ENCODE measurements at regions of chr1 and their contacts with region 1.

Region 1: DNA sequence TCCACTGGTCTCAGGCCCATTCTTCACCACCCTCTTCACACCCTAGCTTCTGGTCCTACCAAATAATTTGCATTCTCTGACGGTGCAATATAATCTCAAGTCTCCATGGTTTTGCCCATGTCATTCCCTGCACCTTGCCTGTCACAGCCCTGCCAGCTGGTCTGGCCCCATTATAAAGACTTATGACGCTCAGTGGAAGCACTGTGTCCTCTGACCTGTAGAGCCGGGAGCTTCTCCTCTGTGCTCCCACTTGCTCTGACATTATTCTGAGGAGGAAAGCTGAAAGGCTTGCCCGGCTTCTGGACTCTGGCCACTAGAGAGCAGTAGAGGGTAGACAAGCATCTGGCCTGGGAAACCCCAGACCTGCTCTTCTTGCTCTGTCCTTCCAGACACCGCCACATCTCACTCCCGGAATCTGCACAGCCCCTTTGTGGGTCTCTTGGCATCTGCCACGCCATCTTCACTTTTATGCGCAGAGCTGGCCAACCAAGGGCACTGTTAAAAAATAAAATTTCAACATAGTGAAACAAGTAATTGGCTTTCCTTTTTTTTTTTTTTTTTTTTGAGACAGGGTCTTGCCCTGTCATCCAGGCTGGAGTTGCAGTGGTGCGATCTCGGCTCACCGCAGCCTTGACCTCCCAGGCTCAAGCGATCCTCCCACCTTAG is 44.4 kb downstream of the NENF start:
- DNase-seq: peak; percentile 83
- ATAC-seq: peak; percentile 91
- H3K4me3 Mint-ChIP-seq: no peak overlapping the region
- H3K27ac Mint-ChIP-seq: no peak overlapping the region
- H3K4me1 Mint-ChIP-seq: peaks cover 25% of the 10 kb centered on the region
- H3K27me3 Mint-ChIP-seq: peaks cover 19% of the 10 kb centered on the region

Region 2: DNA sequence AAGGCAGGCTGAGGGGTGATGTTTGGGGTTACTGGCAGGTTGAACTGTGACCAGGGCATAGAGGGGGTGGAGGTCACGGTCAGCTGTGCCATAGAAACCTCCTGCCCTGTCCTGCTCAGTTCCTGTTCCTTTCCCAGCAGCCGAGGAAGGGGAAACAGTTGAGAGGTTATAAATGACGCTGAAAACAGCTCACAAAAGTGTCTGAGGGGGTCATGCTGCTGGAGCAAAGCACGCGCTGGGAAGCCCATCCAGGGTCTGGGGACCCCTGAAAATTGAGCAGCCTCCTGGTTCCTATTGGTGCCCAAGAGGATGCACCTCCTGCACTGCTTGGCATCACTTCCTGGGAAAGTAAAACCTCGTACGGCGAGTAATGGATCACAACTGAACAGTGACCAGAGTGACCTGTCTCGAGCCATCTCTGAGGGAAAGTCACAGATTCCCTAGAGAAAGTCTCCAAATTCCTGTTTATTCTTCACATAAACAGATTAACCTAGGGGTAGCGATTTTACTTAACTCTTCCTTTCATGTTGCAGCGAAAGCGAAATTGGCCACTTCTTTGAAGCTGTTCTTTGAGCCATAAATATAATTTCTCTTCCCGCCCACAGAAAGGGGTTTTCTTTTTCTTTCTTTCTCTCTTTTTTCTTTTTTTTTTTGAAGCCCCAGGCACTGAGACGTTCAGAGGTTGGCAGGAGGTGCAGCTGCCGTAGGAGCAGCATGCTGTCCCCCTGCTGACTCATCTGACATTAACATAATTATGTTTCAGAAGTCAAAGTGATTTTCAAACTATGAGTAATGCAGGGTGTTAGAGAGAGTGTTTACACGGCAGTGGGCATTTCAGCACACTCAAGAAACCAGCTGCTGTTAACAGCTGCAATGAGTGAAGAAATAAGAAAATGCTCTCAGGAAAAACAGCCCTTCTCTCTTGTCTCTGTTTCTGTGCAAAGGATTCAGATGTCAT is 89.7 kb after region 1 on chr1:
- CTCF ChIA-PET with region 1: interaction called, 17 read pairs
- POLR2A ChIA-PET with region 1: no interaction called
- DNase-seq: peak; percentile 64
- ATAC-seq: peak; percentile 99
- H3K4me3 Mint-ChIP-seq: peak overlapping the region; percentile 85
- H3K27ac Mint-ChIP-seq: peak overlapping the region; percentile 92
- H3K4me1 Mint-ChIP-seq: peaks cover 22% of the 10 kb centered on the region
- H3K27me3 Mint-ChIP-seq: peaks cover 15% of the 10 kb centered on the region

Region 3: DNA sequence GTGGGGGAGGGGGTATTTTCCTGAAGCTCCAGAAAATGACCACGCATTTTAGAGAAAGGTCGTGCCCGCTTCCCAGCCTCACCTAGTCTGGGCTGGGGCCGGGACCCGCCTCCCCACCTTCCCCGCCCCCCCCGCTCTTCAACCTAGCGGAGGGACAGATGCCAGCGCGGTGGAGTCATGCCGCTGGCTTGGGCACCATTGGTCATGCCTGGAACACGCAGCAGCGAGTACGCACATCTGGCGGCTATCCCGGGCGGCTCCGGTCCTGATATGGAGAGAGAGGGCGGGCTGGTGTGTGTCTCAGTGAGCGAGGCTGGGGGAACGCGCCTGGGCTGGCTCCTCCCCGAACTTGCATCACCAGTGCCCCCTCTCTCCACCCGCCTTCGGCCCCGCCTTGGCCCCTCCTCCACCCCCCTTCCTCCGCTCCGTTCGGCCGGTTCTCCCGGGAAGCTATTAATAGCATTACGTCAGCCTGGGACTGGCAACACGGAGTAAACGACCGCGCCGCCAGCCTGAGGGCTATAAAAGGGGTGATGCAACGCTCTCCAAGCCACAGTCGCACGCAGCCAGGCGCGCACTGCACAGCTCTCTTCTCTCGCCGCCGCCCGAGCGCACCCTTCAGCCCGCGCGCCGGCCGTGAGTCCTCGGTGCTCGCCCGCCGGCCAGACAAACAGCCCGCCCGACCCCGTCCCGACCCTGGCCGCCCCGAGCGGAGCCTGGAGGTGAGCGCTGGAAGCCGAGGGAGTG is 131.2 kb after region 1 on chr1 and contains the start of gene ATF3:
- CTCF ChIA-PET with region 1: interaction called, 14 read pairs
- POLR2A ChIA-PET with region 1: interaction called, 6 read pairs
- DNase-seq: peak; percentile 97
- ATAC-seq: peak; percentile 74
- H3K4me3 Mint-ChIP-seq: peak within 1 kb of the TSS; percentile 85
- H3K27ac Mint-ChIP-seq: peak within 1 kb of the TSS; percentile 96
- H3K4me1 Mint-ChIP-seq: peaks cover 49% of the 10 kb centered on the region
- H3K27me3 Mint-ChIP-seq: peaks cover 39% of the 10 kb centered on the region
- total RNA-seq, gene ATF3: 12.1 to 12.5 TPM

Region 4: DNA sequence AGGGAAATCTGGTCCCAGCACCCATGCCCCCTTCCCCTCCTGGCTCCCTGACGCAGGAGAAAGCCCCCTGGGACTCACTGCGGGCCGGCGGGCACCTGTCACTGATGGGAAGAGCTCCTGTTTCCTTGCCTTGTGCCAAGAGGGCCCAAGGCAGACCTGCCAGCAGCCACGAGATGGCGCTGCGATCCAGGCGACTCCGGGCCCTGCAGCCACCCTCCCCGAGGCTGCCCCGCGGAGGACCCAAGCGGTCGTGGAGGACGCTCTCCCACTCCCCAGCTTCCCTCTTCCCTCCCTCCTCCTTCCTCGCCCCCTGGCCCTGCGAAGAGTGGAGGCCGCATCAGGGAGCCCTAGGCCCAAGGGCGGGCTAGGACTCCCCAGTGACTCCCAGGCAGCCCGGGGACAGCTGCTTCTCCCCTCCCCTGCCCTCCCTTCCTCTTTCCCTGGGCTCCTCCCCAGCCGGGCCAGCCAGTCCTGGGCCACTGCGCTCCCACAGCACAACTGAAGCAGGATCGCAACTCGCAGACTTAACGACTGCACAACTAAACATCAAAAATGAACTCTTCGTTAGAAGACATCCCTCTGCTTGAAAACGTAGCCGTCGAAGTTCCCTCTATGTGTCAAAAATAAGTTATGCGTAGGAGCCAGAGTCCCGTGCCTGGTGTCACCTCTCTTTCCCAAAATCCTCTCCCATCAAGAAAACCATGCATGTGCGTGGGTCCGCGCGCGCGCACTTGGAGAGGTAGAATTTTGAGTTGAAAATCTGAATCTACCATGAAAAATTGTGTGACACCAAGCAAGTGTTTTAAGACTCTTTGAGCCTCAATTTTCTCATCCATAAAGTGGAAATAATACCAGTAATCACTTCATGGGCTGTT is 188.3 kb after region 1 on chr1:
- CTCF ChIA-PET with region 1: interaction called, 65 read pairs
- POLR2A ChIA-PET with region 1: no interaction called
- DNase-seq: peak; percentile 85
- ATAC-seq: peak; percentile 99
- H3K4me3 Mint-ChIP-seq: peak overlapping the region; percentile 79
- H3K27ac Mint-ChIP-seq: peak overlapping the region; percentile 82
- H3K4me1 Mint-ChIP-seq: peaks cover 35% of the 10 kb centered on the region
- H3K27me3 Mint-ChIP-seq: peaks cover 15% of the 10 kb centered on the region

Region 5: GRCh38 chr1:212749821-212750535 is 272.8 kb after region 1 on chr1:
- CTCF ChIA-PET with region 1: interaction called, 13 read pairs
- POLR2A ChIA-PET with region 1: no interaction called
- DNase-seq: no peak
- ATAC-seq: peak; percentile 45
- H3K4me3 Mint-ChIP-seq: no peak overlapping the region
- H3K27ac Mint-ChIP-seq: no peak overlapping the region
- H3K4me1 Mint-ChIP-seq: peaks cover 41% of the 10 kb centered on the region
- H3K27me3 Mint-ChIP-seq: no peaks in the 10 kb centered on the region